Spleen (tissue), 13 donors: ENCODE measurements at regions of chr18 and their contacts with region 1.

Region 1: GRCh38 chr18:34933880-34934708 is 107.1 kb upstream of the MAPRE2 start:
- DNase-seq: no peak
- H3K4me3 ChIP-seq: no peak overlapping the region
- H3K27ac ChIP-seq: no peak overlapping the region
- H3K4me1 ChIP-seq: no peaks in the 10 kb centered on the region
- H3K27me3 ChIP-seq: no peaks in the 10 kb centered on the region
- CTCF ChIP-seq: no peak
- POLR2A ChIP-seq: no peak

Region 2: GRCh38 chr18:34661464-34662111 is 272.5 kb before region 1 on chr18:
- intact Hi-C with region 1: no loop called
- DNase-seq: no peak
- H3K4me3 ChIP-seq: no peak overlapping the region
- H3K27ac ChIP-seq: no peak overlapping the region
- H3K4me1 ChIP-seq: peaks cover 0 to 14% (median 5%) of the 10 kb centered on the region in 6 donors
- H3K27me3 ChIP-seq: no peaks in the 10 kb centered on the region
- CTCF ChIP-seq: peak; percentile 17 to 76 (median 62)
- POLR2A ChIP-seq: no peak

Region 3: DNA sequence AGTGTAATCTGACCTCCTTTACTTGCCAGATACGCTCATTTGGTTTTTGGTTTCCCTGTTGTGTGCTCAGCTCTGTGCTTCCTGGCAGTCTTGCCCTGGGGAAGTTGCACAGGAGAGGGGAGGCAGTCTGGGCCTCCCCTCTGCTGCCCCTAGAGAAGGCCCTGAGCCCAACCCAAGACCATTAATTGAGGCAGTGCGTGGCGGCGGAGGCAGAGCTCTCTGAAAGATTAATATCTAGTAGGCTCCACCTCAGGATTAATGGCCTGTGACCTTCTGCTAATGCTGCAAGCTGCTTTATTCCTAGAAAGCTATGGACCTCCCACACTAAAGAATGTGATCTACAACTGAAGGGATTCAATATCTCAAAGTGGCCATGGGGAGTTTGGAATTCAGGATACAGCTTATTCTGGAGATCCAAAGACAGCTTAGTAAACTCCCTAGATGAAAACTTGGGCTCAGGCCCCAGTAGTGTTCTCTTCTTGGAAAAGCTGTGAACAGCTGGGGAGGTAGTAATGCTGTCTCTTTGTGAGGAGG is 65.7 kb after region 1 on chr18:
- intact Hi-C with region 1: loop called (anchors 10 kb)
- DNase-seq: no peak
- H3K4me3 ChIP-seq: no peak overlapping the region
- H3K27ac ChIP-seq: no peak overlapping the region
- H3K4me1 ChIP-seq: no peaks in the 10 kb centered on the region
- H3K27me3 ChIP-seq: no peaks in the 10 kb centered on the region
- CTCF ChIP-seq: no peak
- POLR2A ChIP-seq: no peak